Natural killer cell (primary cell): ENCODE measurements at regions of chr10 and their contacts with region 1.

Region 1: GRCh38 chr10:45008524-45009161 is 7.9 kb downstream of the ZNF22 start:
- DNase-seq: peak in 1 of 2 donors; percentile 79
- ATAC-seq: peak; percentile 87 to 94 (median 88)
- H3K4me3 ChIP-seq: no peak overlapping the region
- H3K4me3 Mint-ChIP-seq: no peak overlapping the region
- H3K27ac ChIP-seq: no peak overlapping the region
- H3K27ac Mint-ChIP-seq: no peak overlapping the region
- H3K4me1 ChIP-seq: peaks cover 1% of the 10 kb centered on the region
- H3K4me1 Mint-ChIP-seq: peaks cover 21 to 23% of the 10 kb centered on the region in 2 donors
- H3K27me3 ChIP-seq: no peaks in the 10 kb centered on the region
- H3K27me3 Mint-ChIP-seq: no peaks in the 10 kb centered on the region
- CTCF ChIP-seq: peak; percentile 87

Region 2: DNA sequence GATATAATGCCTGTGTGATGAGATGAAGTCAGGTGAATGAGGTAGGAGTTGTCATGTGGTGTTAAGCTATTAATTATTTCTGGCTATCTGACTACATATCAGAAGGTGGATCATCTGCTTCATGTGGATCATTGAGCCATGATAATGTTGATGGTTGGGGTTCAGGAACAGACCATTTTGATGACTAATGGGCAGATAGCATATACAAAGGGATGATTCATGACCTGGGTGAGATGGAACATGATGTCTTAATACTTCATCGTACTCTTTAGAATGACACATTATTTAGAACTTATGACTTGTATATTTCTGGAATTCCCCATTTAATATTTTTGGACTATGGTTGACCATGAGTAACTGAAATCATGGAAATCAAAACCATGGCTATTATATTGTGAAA is 151.6 kb after region 1 on chr10:
- intact Hi-C with region 1: loop called (anchors 10 kb)
- DNase-seq: no peak
- ATAC-seq: no peak
- H3K4me3 ChIP-seq: no peak overlapping the region
- H3K4me3 Mint-ChIP-seq: no peak overlapping the region
- H3K27ac ChIP-seq: no peak overlapping the region
- H3K27ac Mint-ChIP-seq: no peak overlapping the region
- H3K4me1 ChIP-seq: no peaks in the 10 kb centered on the region
- H3K4me1 Mint-ChIP-seq: no peaks in the 10 kb centered on the region
- H3K27me3 ChIP-seq: no peaks in the 10 kb centered on the region
- H3K27me3 Mint-ChIP-seq: peaks cover 8 to 9% of the 10 kb centered on the region in 2 donors
- CTCF ChIP-seq: no peak

Region 3: DNA sequence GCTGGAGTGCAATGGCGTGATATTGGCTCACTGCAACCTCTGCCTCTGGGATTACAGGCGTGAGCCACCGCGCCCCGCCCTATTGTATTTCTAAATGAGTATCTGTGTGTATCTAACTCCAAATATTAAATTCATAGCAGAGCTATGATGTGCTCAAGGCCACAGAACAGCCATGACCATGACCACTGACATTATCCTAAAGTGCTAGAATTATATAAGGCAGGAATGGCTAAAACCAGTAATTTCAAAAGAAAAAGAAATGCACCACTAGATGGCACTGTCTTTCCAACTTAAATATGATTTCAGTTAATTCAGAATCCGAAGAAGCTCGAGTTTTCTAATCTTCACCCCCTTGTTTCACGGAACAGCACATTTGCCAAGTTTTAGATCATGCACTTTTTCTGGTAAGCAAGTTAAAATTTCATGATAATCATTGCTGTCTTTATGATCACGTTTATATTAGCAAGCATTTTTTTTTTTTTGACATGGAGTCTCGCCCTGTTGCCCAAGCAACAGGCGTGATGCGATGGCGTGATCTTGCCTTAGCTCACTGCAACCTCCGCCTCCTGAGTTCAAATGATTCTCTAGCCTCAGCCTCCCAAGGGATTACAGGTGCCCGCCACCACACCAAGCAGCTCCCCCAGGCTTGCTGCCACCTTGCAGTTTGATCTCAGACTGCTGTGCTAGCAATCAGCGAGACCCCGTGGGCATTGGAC is 241.5 kb after region 1 on chr10:
- intact Hi-C with region 1: loop called (anchors 2 kb)
- DNase-seq: peak in 1 of 2 donors; percentile 68
- ATAC-seq: peak in 2 of 3 donors; percentile 26 to 63
- H3K4me3 ChIP-seq: no peak overlapping the region
- H3K4me3 Mint-ChIP-seq: peak overlapping the region; percentile 40
- H3K27ac ChIP-seq: no peak overlapping the region
- H3K27ac Mint-ChIP-seq: no peak overlapping the region
- H3K4me1 ChIP-seq: no peaks in the 10 kb centered on the region
- H3K4me1 Mint-ChIP-seq: peaks cover 7 to 8% of the 10 kb centered on the region in 2 donors
- H3K27me3 ChIP-seq: no peaks in the 10 kb centered on the region
- H3K27me3 Mint-ChIP-seq: peaks cover 7 to 13% of the 10 kb centered on the region in 2 donors
- CTCF ChIP-seq: peak; percentile 59

Region 4: GRCh38 chr10:45418849-45419675 is 410.4 kb after region 1 on chr10:
- intact Hi-C with region 1: loop called (anchors 10 kb)
- DNase-seq: peak; percentile 52 to 60
- ATAC-seq: peak; percentile 81 to 84 (median 82)
- H3K4me3 ChIP-seq: peak overlapping the region; percentile 67
- H3K4me3 Mint-ChIP-seq: peak overlapping the region; percentile 97
- H3K27ac ChIP-seq: peak overlapping the region; percentile 75
- H3K27ac Mint-ChIP-seq: peak overlapping the region; percentile 83 to 97
- H3K4me1 ChIP-seq: peaks cover 56% of the 10 kb centered on the region
- H3K4me1 Mint-ChIP-seq: peaks cover 30 to 46% of the 10 kb centered on the region in 2 donors
- H3K27me3 ChIP-seq: no peaks in the 10 kb centered on the region
- H3K27me3 Mint-ChIP-seq: no peaks in the 10 kb centered on the region
- CTCF ChIP-seq: no peak

Region 5: DNA sequence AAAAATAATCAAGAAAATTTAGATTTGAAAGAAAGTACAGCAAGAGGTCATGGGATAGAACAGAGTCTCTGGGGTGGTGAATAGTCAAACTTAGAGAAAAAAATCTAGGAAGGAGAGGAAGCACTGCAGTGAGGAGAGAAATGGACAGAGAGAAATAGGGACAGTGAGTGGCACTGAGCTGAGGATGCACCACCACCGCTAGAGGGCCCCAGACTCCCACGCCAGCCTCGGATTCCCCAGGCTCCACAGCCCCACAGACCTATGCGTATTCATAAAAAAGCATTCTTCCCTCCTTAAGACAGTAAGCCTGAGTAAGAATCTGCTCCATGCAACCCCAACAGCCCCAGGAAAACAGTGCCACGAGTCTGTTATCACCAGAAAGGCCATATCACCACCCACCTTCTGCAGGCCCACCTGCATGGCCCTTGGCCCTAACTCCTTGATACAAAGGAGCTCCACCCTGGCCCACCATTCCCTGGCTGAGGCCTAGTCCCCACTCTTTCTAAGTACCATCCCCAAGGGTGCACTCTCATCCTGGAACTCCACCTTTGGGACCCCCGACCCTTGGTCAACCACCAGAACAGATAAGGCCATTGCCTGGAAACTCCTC is 456.4 kb after region 1 on chr10:
- intact Hi-C with region 1: loop called (anchors 1 kb)
- DNase-seq: peak; percentile 73 to 86
- ATAC-seq: peak; percentile 92 to 99 (median 99)
- H3K4me3 ChIP-seq: no peak overlapping the region
- H3K4me3 Mint-ChIP-seq: no peak overlapping the region
- H3K27ac ChIP-seq: no peak overlapping the region
- H3K27ac Mint-ChIP-seq: peak overlapping the region in 1 of 2 donors; percentile 47
- H3K4me1 ChIP-seq: peaks cover 15% of the 10 kb centered on the region
- H3K4me1 Mint-ChIP-seq: peaks cover 16% of the 10 kb centered on the region in 2 donors
- H3K27me3 ChIP-seq: no peaks in the 10 kb centered on the region
- H3K27me3 Mint-ChIP-seq: no peaks in the 10 kb centered on the region
- CTCF ChIP-seq: peak; percentile 91

Region 6: GRCh38 chr10:45580371-45581215 is 572.0 kb after region 1 on chr10:
- intact Hi-C with region 1: loop called (anchors 10 kb)
- DNase-seq: peak; percentile 42 to 67
- ATAC-seq: peak; percentile 72 to 90 (median 84)
- H3K4me3 ChIP-seq: peak overlapping the region; percentile 43
- H3K4me3 Mint-ChIP-seq: peak overlapping the region; percentile 94
- H3K27ac ChIP-seq: peak overlapping the region; percentile 83
- H3K27ac Mint-ChIP-seq: peak overlapping the region in 1 of 2 donors; percentile 98
- H3K4me1 ChIP-seq: peaks cover 17% of the 10 kb centered on the region
- H3K4me1 Mint-ChIP-seq: peaks cover 28 to 33% of the 10 kb centered on the region in 2 donors
- H3K27me3 ChIP-seq: no peaks in the 10 kb centered on the region
- H3K27me3 Mint-ChIP-seq: no peaks in the 10 kb centered on the region
- CTCF ChIP-seq: no peak